ENCODE measurements at regions of chr19 and their contacts with region 1.

Region 1: DNA sequence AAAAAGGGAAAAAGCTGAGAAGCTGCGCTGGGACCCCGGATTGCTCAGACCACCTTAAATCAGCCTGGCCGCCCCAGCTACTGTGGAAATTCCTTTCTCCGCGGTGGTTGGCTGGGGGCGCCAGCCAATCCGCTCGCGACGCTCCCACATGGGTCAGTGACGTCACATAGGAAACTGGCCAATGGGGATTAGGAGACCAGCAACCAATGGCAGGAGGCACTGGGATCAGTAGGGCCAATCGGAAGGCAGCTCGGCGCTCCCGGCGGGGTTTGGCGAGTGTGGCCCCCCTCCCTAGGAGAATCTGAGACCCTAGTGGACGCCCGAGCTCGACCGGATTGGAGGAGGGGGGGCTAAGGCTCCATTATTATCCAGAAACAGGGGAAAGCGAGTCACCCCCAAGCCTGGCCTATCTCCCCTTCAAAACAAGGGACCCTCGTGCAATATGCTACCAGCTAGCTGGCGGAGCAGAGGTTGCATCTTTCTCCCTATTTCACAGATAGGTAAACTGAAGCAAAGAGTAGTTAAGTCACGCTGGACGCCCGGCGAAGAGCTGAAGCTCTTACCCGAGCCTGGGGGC is 6.5 kb upstream of the TLE2 start:
- DNase-seq: peak; percentile 97
- H3K4me3 Mint-ChIP-seq: peak overlapping the region; percentile 79
- H3K27ac Mint-ChIP-seq: peak overlapping the region; percentile 97
- H3K4me1 Mint-ChIP-seq: peaks cover 21% of the 10 kb centered on the region
- H3K27me3 Mint-ChIP-seq: peaks cover 29% of the 10 kb centered on the region

Region 2: GRCh38 chr19:2856457-2857050 is 179.1 kb before region 1 on chr19:
- CTCF ChIA-PET with region 1: no interaction called
- POLR2A ChIA-PET with region 1: no interaction called
- DNase-seq: no peak
- H3K4me3 Mint-ChIP-seq: no peak overlapping the region
- H3K27ac Mint-ChIP-seq: no peak overlapping the region
- H3K4me1 Mint-ChIP-seq: peaks cover 12% of the 10 kb centered on the region
- H3K27me3 Mint-ChIP-seq: no peaks in the 10 kb centered on the region

Region 3: GRCh38 chr19:3053218-3053699 is 17.6 kb after region 1 on chr19:
- CTCF ChIA-PET with region 1: interaction called, 13 read pairs
- POLR2A ChIA-PET with region 1: interaction called, 3 read pairs
- DNase-seq: no peak
- H3K4me3 Mint-ChIP-seq: no peak overlapping the region
- H3K27ac Mint-ChIP-seq: no peak overlapping the region
- H3K4me1 Mint-ChIP-seq: peaks cover 32% of the 10 kb centered on the region
- H3K27me3 Mint-ChIP-seq: peaks cover 2% of the 10 kb centered on the region

Region 4: DNA sequence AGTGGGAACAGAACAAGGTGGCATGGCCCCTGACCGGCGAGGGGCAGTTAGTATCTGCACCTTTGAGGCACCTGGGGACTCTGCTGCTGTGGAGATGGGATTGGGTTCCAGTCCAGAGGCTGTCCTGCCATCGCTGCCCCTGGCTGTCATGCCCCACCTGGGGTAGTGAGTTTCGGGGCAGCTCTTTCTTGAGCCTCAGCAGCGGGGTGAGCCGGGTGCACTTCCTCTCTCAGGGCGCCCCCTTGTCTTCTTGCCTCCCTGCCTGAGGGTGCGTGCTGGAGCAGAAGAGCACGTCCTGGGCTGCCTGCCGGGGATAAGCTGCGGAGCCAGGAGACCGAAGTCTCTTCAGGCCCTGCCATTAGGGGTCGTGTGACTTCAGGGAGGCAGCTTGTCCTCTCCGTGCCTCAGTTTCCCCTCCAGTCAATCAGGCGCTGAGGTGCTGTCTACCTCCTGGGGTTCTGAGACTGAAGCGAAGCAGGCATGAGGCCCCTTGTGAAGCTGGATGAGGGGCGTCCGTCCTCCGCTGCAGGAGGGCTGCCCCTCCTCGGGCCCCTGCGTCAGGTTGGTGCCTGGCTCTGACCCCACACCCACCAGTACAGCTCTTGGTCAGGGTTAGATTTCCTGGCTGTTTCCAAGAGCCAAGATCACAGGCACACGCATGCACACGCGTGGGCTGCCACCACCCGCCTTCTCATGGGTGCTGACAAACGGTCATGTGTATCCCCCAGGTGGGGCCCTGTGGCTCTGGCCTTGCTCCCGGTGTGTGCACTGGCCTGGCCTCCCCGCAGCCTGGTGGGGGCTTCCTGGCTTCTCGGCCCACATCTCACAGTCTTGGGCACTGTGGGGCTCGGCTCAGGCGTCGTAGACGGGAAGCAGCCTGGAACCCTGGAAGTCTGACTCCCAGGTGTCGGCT is 66.9 kb after region 1 on chr19:
- CTCF ChIA-PET with region 1: interaction called, 10 read pairs
- POLR2A ChIA-PET with region 1: no interaction called
- DNase-seq: no peak
- H3K4me3 Mint-ChIP-seq: no peak overlapping the region
- H3K27ac Mint-ChIP-seq: no peak overlapping the region
- H3K4me1 Mint-ChIP-seq: peaks cover 12% of the 10 kb centered on the region
- H3K27me3 Mint-ChIP-seq: peaks cover 16% of the 10 kb centered on the region

Measured in activated CD4-positive, alpha-beta T cell treated with anti-CD3 and anti-CD28 coated beads, Interleukin-2, amount 10 ng/mL, durations not matched to agents 7 days and 5 days (primary cell).